GM12878 (cell line): ENCODE measurements at regions of chr18 and their contacts with region 1.

Region 1: GRCh38 chr18:49178736-49179135 is 228.0 kb upstream of the SMAD7 start:
- DNase-seq: no peak
- ATAC-seq: peak; percentile 71
- H3K4me3 ChIP-seq: no peak overlapping the region
- H3K27ac ChIP-seq: no peak overlapping the region
- H3K4me1 ChIP-seq: peaks cover 9% of the 10 kb centered on the region; the same call in 1 of the 2 replicates
- H3K27me3 ChIP-seq: no peaks in the 10 kb centered on the region
- CTCF ChIP-seq: peak; percentile 49 to 62 (median 56); a peak in 5 of 6 replicates
- EP300 ChIP-seq: no peak
- POLR2A ChIP-seq: no peak
- RAD21 ChIP-seq: peak; percentile 83

Region 2: GRCh38 chr18:48680339-48681221 is 498.2 kb before region 1 on chr18:
- CTCF ChIA-PET with region 1: interaction called, 99 read pairs
- POLR2A ChIA-PET with region 1: no interaction called
- RAD21 ChIA-PET with region 1: interaction called, 11 read pairs
- SMC1A ChIA-PET with region 1: interaction called, 4 read pairs
- in situ Hi-C with region 1: loop called (anchors 5 kb)
- intact Hi-C with region 1: loop called (anchors 1 kb)
- DNase-seq: no peak
- ATAC-seq: no peak
- H3K4me3 ChIP-seq: no peak overlapping the region
- H3K27ac ChIP-seq: no peak overlapping the region
- H3K4me1 ChIP-seq: peaks cover 5% of the 10 kb centered on the region
- H3K27me3 ChIP-seq: no peaks in the 10 kb centered on the region
- CTCF ChIP-seq: no peak
- EP300 ChIP-seq: no peak
- POLR2A ChIP-seq: no peak
- RAD21 ChIP-seq: no peak

Region 3: DNA sequence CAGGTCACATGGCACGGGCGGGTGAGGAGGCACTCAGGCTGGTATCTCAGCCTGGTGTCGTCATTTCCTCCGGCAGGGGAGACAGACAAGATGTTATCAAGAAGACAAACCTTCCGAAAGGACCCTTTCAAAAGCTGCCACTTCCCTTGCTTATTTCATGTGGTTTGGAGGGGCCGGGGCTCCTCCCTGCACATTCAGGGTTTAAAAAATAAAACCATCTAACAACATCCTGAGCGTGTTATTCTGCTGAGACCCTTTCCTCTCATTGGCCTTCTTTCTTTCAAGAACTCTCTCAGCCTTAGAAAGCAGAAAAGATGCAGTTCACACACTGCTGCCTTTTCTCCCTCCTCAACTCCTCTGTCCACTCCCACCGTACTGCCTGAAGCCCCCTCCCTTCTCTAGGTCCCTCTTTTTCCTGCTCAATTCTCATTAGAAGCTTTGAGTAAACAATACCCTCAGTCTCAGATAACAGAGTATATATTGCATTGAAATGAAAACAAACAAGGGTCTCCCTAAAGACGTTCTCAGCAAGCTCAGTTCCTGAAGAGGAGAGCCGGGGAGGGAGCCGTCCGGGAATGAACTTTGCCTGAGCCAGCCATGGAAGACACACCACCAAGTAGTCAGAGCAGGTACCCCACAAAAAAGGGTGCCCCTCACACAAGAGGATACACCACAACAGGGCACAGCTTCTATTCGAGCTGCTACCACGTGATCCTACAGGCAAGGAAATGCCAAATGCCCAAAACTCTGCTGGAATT is 237.7 kb before region 1 on chr18:
- CTCF ChIA-PET with region 1: interaction called, 3 read pairs
- POLR2A ChIA-PET with region 1: no interaction called
- RAD21 ChIA-PET with region 1: no interaction called
- SMC1A ChIA-PET with region 1: no interaction called
- in situ Hi-C with region 1: loop called (anchors 10 kb)
- intact Hi-C with region 1: loop called (anchors 5 kb)
- DNase-seq: peak; percentile 62
- ATAC-seq: peak; percentile 74
- H3K4me3 ChIP-seq: peak overlapping the region; percentile 35; the same call in 1 of the 2 replicates
- H3K27ac ChIP-seq: peak overlapping the region; percentile 63
- H3K4me1 ChIP-seq: peaks cover 41% of the 10 kb centered on the region
- H3K27me3 ChIP-seq: no peaks in the 10 kb centered on the region
- CTCF ChIP-seq: no peak
- EP300 ChIP-seq: no peak
- POLR2A ChIP-seq: no peak
- RAD21 ChIP-seq: no peak

Region 4: DNA sequence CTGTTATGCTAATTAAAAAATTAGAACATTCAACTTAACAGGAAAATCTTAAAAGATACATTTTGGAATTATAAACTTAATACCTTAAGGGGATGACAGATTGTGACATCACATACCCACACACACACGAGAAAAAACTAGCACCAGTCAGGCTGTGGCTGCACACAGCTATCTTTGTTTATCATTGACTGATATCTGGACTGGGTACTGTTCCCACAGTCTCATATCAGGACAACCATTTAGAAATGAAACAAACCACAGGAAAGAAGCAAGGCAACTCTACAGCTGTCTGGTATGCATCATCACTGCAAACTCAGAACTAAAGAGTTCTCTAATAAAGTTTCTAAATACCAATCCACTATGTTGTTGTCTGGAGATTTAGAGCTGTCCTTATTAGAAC is 17.1 kb before region 1 on chr18:
- CTCF ChIA-PET with region 1: interaction called, 31 read pairs
- POLR2A ChIA-PET with region 1: interaction called, 4 read pairs
- RAD21 ChIA-PET with region 1: interaction called, 28 read pairs
- SMC1A ChIA-PET with region 1: interaction called, 46 read pairs
- in situ Hi-C with region 1: no loop called
- intact Hi-C with region 1: no loop called
- DNase-seq: peak; percentile 90
- ATAC-seq: peak; percentile 96
- H3K4me3 ChIP-seq: no peak overlapping the region
- H3K27ac ChIP-seq: peak overlapping the region; percentile 71
- H3K4me1 ChIP-seq: peaks cover 35% of the 10 kb centered on the region
- H3K27me3 ChIP-seq: no peaks in the 10 kb centered on the region
- CTCF ChIP-seq: no peak
- EP300 ChIP-seq: peak; percentile 97 to 99
- POLR2A ChIP-seq: no peak
- RAD21 ChIP-seq: no peak

Region 5: DNA sequence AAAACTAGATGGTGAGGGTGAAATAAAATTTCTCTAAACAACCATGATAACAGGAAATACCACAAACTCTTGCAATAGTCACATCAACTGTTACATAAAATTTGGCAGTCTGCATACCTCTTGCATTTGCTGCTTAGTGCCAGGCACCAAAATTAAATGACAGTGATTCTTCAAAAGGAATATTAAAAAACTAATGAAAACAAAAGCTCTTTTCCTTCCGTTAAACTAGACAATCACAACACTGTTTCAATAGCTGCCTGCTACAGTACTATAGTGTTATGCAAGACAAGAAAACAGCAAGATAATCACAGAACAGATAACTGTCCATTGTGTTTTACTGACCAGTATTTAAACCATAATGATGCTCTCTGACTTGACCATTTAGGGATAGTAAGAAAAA is 11.0 kb after region 1 on chr18:
- CTCF ChIA-PET with region 1: interaction called, 7 read pairs
- POLR2A ChIA-PET with region 1: no interaction called
- RAD21 ChIA-PET with region 1: interaction called, 5 read pairs
- SMC1A ChIA-PET with region 1: interaction called, 14 read pairs
- in situ Hi-C with region 1: no loop called
- intact Hi-C with region 1: no loop called
- DNase-seq: no peak
- ATAC-seq: no peak
- H3K4me3 ChIP-seq: no peak overlapping the region
- H3K27ac ChIP-seq: no peak overlapping the region
- H3K4me1 ChIP-seq: no peaks in the 10 kb centered on the region
- H3K27me3 ChIP-seq: no peaks in the 10 kb centered on the region
- CTCF ChIP-seq: no peak
- EP300 ChIP-seq: no peak
- POLR2A ChIP-seq: no peak
- RAD21 ChIP-seq: no peak